Panc1 (cell line): ENCODE measurements at regions of chrX and their contacts with region 1.

Region 1: GRCh38 chrX:48957827-48958634 is 624 bp upstream of the OTUD5 start:
- DNase-seq: peak; percentile 89
- ATAC-seq: peak; percentile 96
- H3K4me3 ChIP-seq: peak overlapping the region; percentile 72 to 79
- H3K27ac ChIP-seq: peak overlapping the region; percentile 87
- H3K4me1 ChIP-seq: peaks cover 13% of the 10 kb centered on the region
- H3K27me3 ChIP-seq: no peaks in the 10 kb centered on the region
- CTCF ChIP-seq: no peak

Region 2: DNA sequence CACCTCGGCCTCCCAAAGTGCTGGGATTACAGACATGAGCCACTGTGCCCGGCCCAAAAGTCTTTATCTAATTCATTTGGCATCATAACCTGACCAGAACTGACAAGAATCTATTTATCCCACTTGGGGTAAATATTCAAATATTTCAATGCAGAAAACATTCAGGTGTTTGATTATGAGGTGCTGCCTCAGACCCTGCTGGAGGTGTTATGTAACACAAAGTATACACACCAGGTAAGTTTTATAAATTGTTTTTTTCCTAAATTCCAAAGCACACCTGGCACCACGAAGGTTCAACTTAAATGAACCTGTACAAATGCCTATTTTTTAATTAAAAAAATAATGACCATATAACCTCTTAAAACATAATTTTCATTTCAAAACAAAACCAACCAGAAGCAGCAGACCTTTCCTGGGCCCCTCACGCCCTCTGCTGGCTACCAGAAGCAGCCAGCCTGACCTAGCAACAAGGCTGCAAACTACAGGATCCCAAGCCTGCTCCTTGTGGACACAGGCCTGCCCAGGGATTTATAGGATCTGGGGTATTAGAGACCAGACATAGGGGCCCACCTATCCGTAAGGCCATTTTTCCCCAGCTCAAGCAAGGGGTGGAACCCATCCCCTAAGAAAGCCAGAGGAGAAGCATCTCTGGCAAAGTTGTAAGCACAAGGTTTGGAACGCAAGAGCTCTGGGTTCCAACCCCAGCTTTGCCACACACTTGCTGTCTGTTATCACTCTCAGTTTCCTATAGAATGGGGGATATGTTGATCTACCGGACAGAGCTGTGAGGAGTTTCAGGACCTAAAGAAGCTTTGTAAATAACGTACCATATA is 12.3 kb before region 1 on chrX:
- CTCF ChIA-PET with region 1: no interaction called
- POLR2A ChIA-PET with region 1: interaction called, 11 read pairs
- in situ Hi-C with region 1: no loop called
- intact Hi-C with region 1: no loop called
- DNase-seq: no peak
- ATAC-seq: peak; percentile 96
- H3K4me3 ChIP-seq: no peak overlapping the region
- H3K27ac ChIP-seq: no peak overlapping the region
- H3K4me1 ChIP-seq: no peaks in the 10 kb centered on the region
- H3K27me3 ChIP-seq: no peaks in the 10 kb centered on the region
- CTCF ChIP-seq: peak; percentile 90

Region 3: GRCh38 chrX:49002091-49002935 is 44.3 kb after region 1 on chrX and contains the start of gene GRIPAP1:
- CTCF ChIA-PET with region 1: no interaction called
- POLR2A ChIA-PET with region 1: interaction called, 15 read pairs
- in situ Hi-C with region 1: no loop called
- intact Hi-C with region 1: no loop called
- DNase-seq: peak; percentile 67
- ATAC-seq: peak; percentile 90
- H3K4me3 ChIP-seq: peak within 1 kb of the TSS; percentile 94 to 99
- H3K27ac ChIP-seq: peak within 1 kb of the TSS; percentile 96
- H3K4me1 ChIP-seq: 0 out of 2 replicates have a peak, but pooled peaks cover 3% of the 10 kb centered on the region
- H3K27me3 ChIP-seq: no peaks in the 10 kb centered on the region
- CTCF ChIP-seq: no peak
- total RNA-seq, gene GRIPAP1: 51.0 TPM

Region 4: GRCh38 chrX:49029876-49030275 is 71.8 kb after region 1 on chrX:
- CTCF ChIA-PET with region 1: no interaction called
- POLR2A ChIA-PET with region 1: interaction called, 18 read pairs
- in situ Hi-C with region 1: no loop called
- intact Hi-C with region 1: no loop called
- DNase-seq: no peak
- ATAC-seq: peak; percentile 54
- H3K4me3 ChIP-seq: no peak overlapping the region
- H3K27ac ChIP-seq: no peak overlapping the region
- H3K4me1 ChIP-seq: no peaks in the 10 kb centered on the region
- H3K27me3 ChIP-seq: no peaks in the 10 kb centered on the region
- CTCF ChIP-seq: no peak